Activated T-helper 1 cell treated with anti-CD3 and anti-CD28 coated beads, Interleukin-12 subunit alpha, Interleukin-12 subunit beta, Interleukin-2, Interleukin-4 antibody, amounts not matched to agents 30 ng/mL and 10 ng/mL and 1 ng/mL, durations not matched to agents 14 hours and 24 hours and 36 hours (primary cell): ENCODE measurements at regions of chr6 and their contacts with region 1.

Region 1: DNA sequence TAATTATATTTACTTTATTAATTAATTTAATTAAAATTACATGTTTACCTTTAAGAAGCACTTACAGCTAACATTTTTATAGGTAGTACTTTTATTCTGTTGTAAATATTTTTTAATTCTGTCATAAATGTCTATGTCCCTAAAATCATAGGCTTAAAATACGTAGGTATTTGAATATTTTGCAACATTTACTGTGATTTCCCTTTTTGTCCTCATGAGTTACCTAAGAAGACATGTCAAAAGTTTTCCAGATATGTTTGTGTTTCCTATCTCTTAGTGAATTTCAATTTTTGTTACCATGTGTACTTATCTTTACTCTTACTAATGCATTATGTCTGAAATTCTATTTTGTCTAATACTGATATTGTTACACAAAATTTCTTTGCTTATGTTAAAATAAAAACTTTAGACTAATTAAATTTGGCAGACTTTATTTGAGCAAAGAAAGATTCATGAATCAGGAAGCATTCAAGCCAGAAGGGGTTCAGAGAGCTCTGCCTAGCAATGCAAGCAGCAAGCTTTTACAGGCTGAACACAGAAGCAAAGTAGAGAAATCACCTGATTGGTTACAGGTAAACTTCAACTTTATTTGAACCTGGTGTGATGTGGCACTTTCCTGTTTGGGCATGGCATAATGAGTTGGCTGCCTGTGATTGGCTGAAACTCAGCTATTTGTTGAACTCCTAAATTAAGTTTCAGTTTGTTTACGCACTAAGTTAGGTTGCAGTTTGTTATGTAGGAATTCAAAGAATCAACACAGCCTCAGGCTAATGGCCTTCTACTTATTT is 123.2 kb upstream of the TMEM170B start:
- DNase-seq: no peak
- H3K4me3 Mint-ChIP-seq: peak overlapping the region; percentile 7
- H3K27ac Mint-ChIP-seq: peak overlapping the region; percentile 49
- H3K4me1 Mint-ChIP-seq: peaks cover 77% of the 10 kb centered on the region
- H3K27me3 Mint-ChIP-seq: no peaks in the 10 kb centered on the region

Region 2: DNA sequence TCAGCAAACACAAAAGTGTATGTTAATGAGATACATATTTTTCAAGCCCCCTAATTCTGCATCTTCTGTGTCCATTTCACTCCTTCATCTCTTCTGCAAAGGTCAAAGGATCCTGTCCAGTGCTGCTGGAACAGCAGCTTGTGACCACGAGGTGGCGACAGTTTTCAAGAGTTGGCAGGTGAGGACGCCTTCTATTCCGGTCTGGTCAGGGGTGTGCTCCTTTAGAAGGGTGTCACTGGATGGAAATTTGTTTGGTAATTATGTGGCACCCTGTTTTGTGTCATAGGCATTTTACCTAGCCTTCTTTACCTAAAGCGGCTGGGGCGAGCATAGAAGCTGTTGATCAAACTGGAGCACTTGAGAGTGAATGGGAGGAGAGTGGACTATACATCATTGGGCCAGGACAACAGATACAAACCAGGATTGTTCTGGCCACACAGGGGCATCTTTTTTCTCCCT is 269.9 kb before region 1 on chr6:
- intact Hi-C with region 1: loop called (anchors 1 kb)
- DNase-seq: peak; percentile 65
- H3K4me3 Mint-ChIP-seq: no peak overlapping the region
- H3K27ac Mint-ChIP-seq: no peak overlapping the region
- H3K4me1 Mint-ChIP-seq: peaks cover 16% of the 10 kb centered on the region
- H3K27me3 Mint-ChIP-seq: peaks cover 1% of the 10 kb centered on the region

Region 3: DNA sequence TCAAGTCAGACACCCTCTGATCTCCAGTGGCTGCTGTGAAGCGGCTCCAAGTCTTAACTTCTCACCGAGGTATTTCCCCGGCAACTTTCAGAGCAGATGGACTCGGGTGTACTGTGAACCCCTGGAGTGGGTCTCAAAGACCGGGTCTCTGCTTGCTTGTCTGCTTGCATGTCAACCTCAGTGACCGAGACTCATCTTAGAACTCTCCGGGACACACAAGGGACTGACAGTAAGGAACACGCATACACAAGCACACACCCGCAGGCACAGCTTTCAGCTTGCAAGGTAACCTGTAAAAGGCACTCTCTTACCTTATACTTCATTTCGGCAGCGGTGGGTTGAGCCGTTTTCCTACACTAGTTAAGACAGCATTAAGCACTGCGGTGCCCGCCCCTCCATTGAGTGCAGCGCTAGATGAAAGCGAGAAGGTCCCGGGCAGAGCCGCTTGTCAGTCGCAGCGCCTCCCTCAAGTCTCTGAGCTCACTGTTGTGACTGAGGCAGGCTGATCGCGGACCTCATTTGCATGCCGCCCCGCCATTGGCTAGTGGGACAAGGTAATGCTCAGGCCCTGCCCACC is 182.1 kb before region 1 on chr6 and contains the start of gene NEDD9:
- intact Hi-C with region 1: loop called (anchors 1 kb)
- DNase-seq: peak; percentile 93
- H3K4me3 Mint-ChIP-seq: peak within 1 kb of the TSS; percentile 98
- H3K27ac Mint-ChIP-seq: peak within 1 kb of the TSS; percentile 96
- H3K4me1 Mint-ChIP-seq: peaks cover 86% of the 10 kb centered on the region
- H3K27me3 Mint-ChIP-seq: no peaks in the 10 kb centered on the region
- total RNA-seq, gene NEDD9: 53.2 and 62.1 TPM in 2 replicates

Region 4: GRCh38 chr6:11324453-11325015 is 89.8 kb before region 1 on chr6:
- intact Hi-C with region 1: loop called (anchors 1 kb)
- DNase-seq: peak; percentile 54
- H3K4me3 Mint-ChIP-seq: peak overlapping the region; percentile 65
- H3K27ac Mint-ChIP-seq: peak overlapping the region; percentile 97
- H3K4me1 Mint-ChIP-seq: peaks cover 91% of the 10 kb centered on the region
- H3K27me3 Mint-ChIP-seq: no peaks in the 10 kb centered on the region

Region 5: GRCh38 chr6:11381801-11382513 is 32.4 kb before region 1 on chr6:
- intact Hi-C with region 1: loop called (anchors 1 kb)
- DNase-seq: peak; percentile 69
- H3K4me3 Mint-ChIP-seq: peak overlapping the region; percentile 92
- H3K27ac Mint-ChIP-seq: peak overlapping the region; percentile 96
- H3K4me1 Mint-ChIP-seq: peaks cover 75% of the 10 kb centered on the region
- H3K27me3 Mint-ChIP-seq: no peaks in the 10 kb centered on the region

Region 6: DNA sequence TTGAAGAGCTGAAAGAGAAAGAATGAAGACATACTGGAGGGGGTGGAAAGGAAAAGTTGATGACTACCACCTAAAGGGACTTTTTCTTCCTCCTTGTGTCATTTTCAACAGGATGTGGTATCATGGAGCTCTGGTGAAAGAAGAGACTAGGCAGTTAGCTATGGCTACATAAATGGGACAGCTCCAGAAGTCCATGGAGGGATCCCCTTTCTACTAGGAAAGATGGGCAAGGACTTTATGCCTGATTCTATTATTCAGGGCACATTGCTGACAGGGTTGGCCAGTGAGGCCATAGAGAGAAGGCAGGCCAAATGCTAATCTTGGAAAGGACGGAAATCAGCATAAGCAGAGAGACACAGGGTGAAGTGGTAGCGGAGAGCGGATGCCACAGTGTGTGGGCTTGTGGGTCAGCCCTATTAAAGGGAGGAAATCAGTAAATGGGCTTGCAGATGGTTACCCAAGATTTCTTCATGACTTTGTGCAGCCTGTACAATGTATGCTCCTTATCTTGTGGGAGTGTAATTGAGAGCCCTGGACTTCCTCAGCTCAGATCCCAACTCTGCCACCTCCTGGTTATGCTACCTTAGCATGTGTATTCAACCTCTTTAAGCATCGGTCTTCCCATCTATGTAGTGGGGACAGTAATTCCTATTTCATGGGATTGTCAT is 45.8 kb after region 1 on chr6:
- intact Hi-C with region 1: loop called (anchors 1 kb)
- DNase-seq: no peak
- H3K4me3 Mint-ChIP-seq: peak overlapping the region; percentile 61
- H3K27ac Mint-ChIP-seq: peak overlapping the region; percentile 88
- H3K4me1 Mint-ChIP-seq: peaks cover 33% of the 10 kb centered on the region
- H3K27me3 Mint-ChIP-seq: no peaks in the 10 kb centered on the region